ENCODE measurements at regions of chr13 and their contacts with region 1.

Region 1: GRCh38 chr13:99501184-99501847 is at the start of gene TM9SF2:
- DNase-seq: peak; percentile 80 to 95 (median 88)
- ATAC-seq: peak; percentile 74
- H3K4me3 ChIP-seq: peak within 1 kb of the TSS; percentile 83
- H3K27ac ChIP-seq: peak within 1 kb of the TSS; percentile 93
- H3K4me1 ChIP-seq: peaks cover 11 to 15% of the 10 kb centered on the region in 2 experiments; a peak in 4 of 5 replicates
- H3K27me3 ChIP-seq: no peaks in the 10 kb centered on the region
- CTCF ChIP-seq: no peak
- EP300 ChIP-seq: no peak; the same call in 1 of the 2 replicates
- POLR2A ChIP-seq: peak; percentile 80
- RAD21 ChIP-seq: no peak
- polyA plus RNA-seq, gene TM9SF2: 23.3 to 32.2 TPM

Region 2: GRCh38 chr13:99442273-99442895 is 58.9 kb before region 1 on chr13:
- CTCF ChIA-PET with region 1: interaction called, 3 read pairs
- POLR2A ChIA-PET with region 1: no interaction called
- in situ Hi-C with region 1: no loop called
- intact Hi-C with region 1: loop called (anchors 2 kb)
- DNase-seq: peak; percentile 30 to 55 (median 36)
- ATAC-seq: peak; percentile 73
- H3K4me3 ChIP-seq: no peak overlapping the region
- H3K27ac ChIP-seq: no peak overlapping the region
- H3K4me1 ChIP-seq: no peaks in the 10 kb centered on the region; a peak in 1 of 5 replicates
- H3K27me3 ChIP-seq: peaks cover 0 to 13% of the 10 kb centered on the region in 2 experiments; a peak in 2 of 5 replicates
- CTCF ChIP-seq: peak; percentile 68 to 82 (median 69); a peak in 5 of 6 replicates
- EP300 ChIP-seq: no peak
- POLR2A ChIP-seq: no peak
- RAD21 ChIP-seq: peak; percentile 80 to 82

Region 3: GRCh38 chr13:99448546-99448945 is 52.8 kb before region 1 on chr13:
- CTCF ChIA-PET with region 1: no interaction called
- POLR2A ChIA-PET with region 1: interaction called, 3 read pairs
- in situ Hi-C with region 1: no loop called
- intact Hi-C with region 1: loop called (anchors 1 kb)
- DNase-seq: no peak
- ATAC-seq: no peak
- H3K4me3 ChIP-seq: no peak overlapping the region
- H3K27ac ChIP-seq: no peak overlapping the region
- H3K4me1 ChIP-seq: peaks cover 5 to 6% of the 10 kb centered on the region in 2 experiments; a peak in 4 of 5 replicates
- H3K27me3 ChIP-seq: no peaks in the 10 kb centered on the region
- CTCF ChIP-seq: no peak
- EP300 ChIP-seq: no peak
- POLR2A ChIP-seq: no peak
- RAD21 ChIP-seq: no peak